ENCODE measurements at regions of chr17 and their contacts with region 1.

Region 1: DNA sequence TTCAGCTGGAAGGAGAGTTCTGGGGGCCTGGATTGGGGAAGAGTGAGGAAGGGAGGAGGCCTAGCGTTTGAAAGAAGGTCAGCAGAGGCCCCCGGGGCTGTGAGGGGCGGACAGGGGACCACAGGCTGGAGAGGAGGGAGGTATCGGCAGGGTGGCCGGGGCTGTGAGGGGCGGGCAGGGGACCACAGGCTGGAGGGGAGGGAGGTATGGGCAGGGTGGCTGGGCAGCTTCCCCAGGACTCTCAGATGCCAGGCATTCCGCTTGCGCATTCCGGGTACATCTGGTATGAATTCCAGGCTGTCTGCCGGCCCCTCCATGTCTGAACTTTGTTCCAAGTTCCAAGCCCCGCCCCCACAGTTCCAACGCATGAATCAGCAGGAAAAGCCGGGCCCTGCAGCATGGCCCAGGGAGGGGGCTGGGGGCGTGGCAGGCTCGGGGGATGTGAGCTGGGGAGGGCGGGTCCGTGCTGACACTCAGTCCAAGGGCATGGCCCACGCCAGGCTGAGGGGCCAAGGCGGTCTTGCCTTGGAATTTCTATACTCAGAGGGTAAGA is 4.3 kb upstream of the TLCD2 start:
- DNase-seq: peak; percentile 99
- ATAC-seq: peak; percentile 56

Region 2: GRCh38 chr17:1673041-1673785 is 41.3 kb before region 1 on chr17:
- intact Hi-C with region 1: loop called (anchors 5 kb)
- DNase-seq: no peak
- ATAC-seq: no peak